Cardiac septum (tissue), 1 donor: ENCODE measurements at regions of chr10 and their contacts with region 1.

Region 1: GRCh38 chr10:86979977-86980795 is 11.9 kb downstream of the ADIRF start:
- DNase-seq: no peak

Region 2: GRCh38 chr10:87045434-87045938 is 65.3 kb after region 1 on chr10:
- intact Hi-C with region 1: loop called (anchors 10 kb)
- DNase-seq: no peak